Tibial artery (tissue), 4 donors: ENCODE measurements at regions of chr16 and their contacts with region 1.

Region 1: DNA sequence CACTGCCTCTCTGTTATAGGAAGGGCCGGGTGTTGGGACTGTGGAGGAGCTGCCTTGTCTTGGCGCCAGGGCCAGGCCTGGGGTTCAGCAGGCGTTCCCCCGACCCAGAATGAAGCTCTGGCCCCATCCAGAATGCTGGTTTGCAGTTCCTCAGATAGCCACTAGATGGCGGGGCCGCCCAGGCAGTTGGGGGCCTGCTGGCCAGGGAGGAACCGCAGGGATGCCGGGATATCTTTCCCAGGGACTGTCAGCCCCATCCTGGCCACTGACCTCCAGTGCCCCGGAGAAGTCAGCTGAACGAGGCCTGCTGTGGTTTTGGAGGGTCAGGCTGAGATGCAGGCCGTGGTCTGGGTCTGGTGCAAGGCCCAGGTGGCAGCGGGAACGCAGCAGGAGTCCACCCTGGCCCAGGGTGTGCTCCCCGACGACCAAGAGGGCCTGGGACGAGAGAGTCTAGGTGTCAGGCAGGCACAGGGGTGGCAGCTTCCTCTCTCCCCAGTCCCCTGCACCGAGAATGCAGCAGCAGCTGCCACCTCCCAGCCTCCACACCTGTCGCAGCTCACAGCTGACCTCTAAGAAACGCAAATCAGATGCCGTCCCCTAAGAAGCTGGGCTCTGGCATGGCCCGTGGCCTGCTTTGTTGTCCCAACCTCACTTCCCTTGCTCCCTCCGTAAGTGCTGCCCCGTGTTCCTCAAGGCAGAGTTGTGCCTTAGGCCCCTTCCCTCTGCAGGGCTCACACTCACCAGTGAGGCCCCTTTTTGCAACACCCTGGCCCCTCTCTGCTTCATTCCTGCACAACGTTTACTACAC is 51.2 kb downstream of the RMI2 start:
- DNase-seq: peak; percentile 63 to 80
- H3K4me3 ChIP-seq: no peak overlapping the region
- H3K27ac ChIP-seq: no peak overlapping the region
- H3K4me1 ChIP-seq: peaks cover 0 to 8% (median 0%) of the 10 kb centered on the region in 4 donors
- H3K27me3 ChIP-seq: no peaks in the 10 kb centered on the region
- CTCF ChIP-seq: peak; percentile 98

Region 2: DNA sequence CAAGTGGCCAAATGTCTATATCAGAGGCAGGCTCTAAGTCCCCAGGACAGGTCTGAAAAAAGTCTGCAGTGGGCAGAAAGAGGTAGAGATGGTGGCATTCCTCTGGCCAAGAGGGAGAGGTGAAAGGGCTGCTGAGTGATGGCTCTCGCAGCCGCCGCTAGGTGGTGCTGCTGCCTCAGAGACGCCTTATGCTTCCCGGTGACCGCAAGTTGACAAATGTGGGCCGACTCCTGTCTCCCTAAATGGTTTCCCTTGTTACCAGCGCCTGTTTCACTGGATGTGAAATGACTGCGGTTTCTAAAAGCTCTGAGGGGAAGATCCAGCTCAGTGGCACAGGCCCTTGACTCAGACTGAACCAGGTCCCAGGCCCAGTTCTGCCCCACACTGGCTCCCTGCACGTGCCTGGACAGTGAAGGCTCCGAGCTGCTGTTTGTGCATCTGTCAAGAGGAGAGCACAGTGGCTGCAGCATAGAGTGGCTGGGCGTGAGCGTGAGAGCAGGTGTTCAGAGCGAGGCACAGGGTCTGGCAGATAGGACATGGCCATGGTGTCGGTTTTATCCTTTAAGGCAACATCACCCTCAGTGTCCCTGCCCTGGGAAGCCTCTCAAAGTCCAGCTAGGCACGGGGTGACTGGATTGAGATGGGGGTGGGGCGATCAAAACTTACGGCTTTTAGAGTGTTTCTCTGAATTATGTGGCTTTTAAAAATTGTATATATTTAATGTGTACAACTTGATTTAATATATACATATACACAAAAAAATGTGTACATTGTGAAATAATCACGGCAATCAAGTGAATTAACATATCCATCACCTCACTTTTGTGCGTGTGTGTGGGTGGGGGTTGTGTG is 432.2 kb before region 1 on chr16:
- intact Hi-C with region 1: loop called (anchors 10 kb)
- DNase-seq: peak; percentile 78 to 89
- H3K4me3 ChIP-seq: no peak overlapping the region
- H3K27ac ChIP-seq: peak overlapping the region; percentile 34 to 61
- H3K4me1 ChIP-seq: peaks cover 0 to 23% (median 12%) of the 10 kb centered on the region in 4 donors
- H3K27me3 ChIP-seq: no peaks in the 10 kb centered on the region
- CTCF ChIP-seq: peak; percentile 93 to 98

Region 3: GRCh38 chr16:10992797-10993196 is 403.6 kb before region 1 on chr16:
- intact Hi-C with region 1: no loop called
- DNase-seq: no peak
- H3K4me3 ChIP-seq: no peak overlapping the region
- H3K27ac ChIP-seq: no peak overlapping the region
- H3K4me1 ChIP-seq: peaks cover 0 to 4% (median 2%) of the 10 kb centered on the region in 4 donors
- H3K27me3 ChIP-seq: no peaks in the 10 kb centered on the region
- CTCF ChIP-seq: no peak

Region 4: GRCh38 chr16:11715246-11715947 is 319.0 kb after region 1 on chr16:
- intact Hi-C with region 1: loop called (anchors 5 kb)
- DNase-seq: no peak
- H3K4me3 ChIP-seq: no peak overlapping the region
- H3K27ac ChIP-seq: no peak overlapping the region
- H3K4me1 ChIP-seq: peaks cover 0 to 9% (median 2%) of the 10 kb centered on the region in 4 donors
- H3K27me3 ChIP-seq: no peaks in the 10 kb centered on the region
- CTCF ChIP-seq: no peak

Region 5: DNA sequence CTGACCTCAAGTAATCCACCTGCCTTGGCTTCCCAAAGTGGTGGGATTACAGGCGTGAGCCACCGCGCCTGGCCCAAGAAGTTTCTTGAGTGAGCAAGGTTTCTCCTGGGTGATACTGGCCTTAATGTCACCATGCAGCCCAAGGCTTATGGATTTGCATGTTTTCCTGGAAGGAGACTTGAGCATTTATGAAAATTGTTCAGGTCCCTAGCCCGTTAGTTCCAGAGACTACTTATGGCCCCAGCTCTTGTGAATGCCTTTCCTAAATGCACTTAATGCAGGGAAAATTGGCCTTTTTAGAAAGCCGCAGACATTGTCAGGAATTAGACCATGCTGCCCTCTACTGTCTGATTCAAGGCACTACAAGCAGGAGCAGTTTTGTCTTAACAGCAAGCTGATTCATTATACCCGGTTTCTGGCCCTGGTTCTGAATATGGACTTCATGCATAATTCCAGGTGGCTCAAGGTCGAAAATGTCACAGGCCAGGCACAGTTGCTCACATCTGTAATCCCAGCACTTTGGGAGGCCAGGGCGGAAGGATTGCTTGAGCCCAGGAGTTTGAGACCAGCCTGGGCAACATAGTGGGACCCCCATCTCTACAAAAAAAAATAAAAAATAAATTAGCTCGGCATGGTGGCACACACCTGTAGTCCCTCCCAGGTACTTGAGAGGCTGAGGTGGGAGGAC is 671.4 kb after region 1 on chr16:
- intact Hi-C with region 1: loop called (anchors 10 kb)
- DNase-seq: peak in 1 of 2 donors; percentile 71
- H3K4me3 ChIP-seq: no peak overlapping the region
- H3K27ac ChIP-seq: no peak overlapping the region
- H3K4me1 ChIP-seq: peaks cover 0 to 15% (median 7%) of the 10 kb centered on the region in 4 donors
- H3K27me3 ChIP-seq: no peaks in the 10 kb centered on the region
- CTCF ChIP-seq: peak; percentile 84 to 93